Posterior vena cava (tissue), 2 donors: ENCODE measurements at regions of chr7 and their contacts with region 1.

Region 1: GRCh38 chr7:125599387-125599786 is 669.8 kb upstream of the POT1 start:
- DNase-seq: no peak

Region 2: GRCh38 chr7:123635551-123636359 is 1963.6 kb before region 1 on chr7:
- intact Hi-C with region 1: no loop called
- DNase-seq: no peak

Region 3: GRCh38 chr7:125663961-125664360 is 64.6 kb after region 1 on chr7:
- intact Hi-C with region 1: loop called in 1 of 2 experiments (anchors 2 kb)
- DNase-seq: no peak

Region 4: GRCh38 chr7:125675640-125676039 is 76.3 kb after region 1 on chr7:
- intact Hi-C with region 1: no loop called
- DNase-seq: no peak